Right lobe of liver (tissue), 6 donors: ENCODE measurements at regions of chr22 and their contacts with region 1.

Region 1: GRCh38 chr22:29040385-29041275 is 21.0 kb downstream of the C22orf31 start:
- DNase-seq: peak in 1 of 3 donors; percentile 71
- ATAC-seq: peak; percentile 73 to 83 (median 78)
- H3K4me3 ChIP-seq: no peak overlapping the region
- H3K27ac ChIP-seq: no peak overlapping the region
- H3K4me1 ChIP-seq: peaks cover 0 to 35% (median 0%) of the 10 kb centered on the region in 4 donors
- H3K27me3 ChIP-seq: no peaks in the 10 kb centered on the region
- CTCF ChIP-seq: peak; percentile 94 to 99 (median 96)
- POLR2A ChIP-seq: no peak

Region 2: DNA sequence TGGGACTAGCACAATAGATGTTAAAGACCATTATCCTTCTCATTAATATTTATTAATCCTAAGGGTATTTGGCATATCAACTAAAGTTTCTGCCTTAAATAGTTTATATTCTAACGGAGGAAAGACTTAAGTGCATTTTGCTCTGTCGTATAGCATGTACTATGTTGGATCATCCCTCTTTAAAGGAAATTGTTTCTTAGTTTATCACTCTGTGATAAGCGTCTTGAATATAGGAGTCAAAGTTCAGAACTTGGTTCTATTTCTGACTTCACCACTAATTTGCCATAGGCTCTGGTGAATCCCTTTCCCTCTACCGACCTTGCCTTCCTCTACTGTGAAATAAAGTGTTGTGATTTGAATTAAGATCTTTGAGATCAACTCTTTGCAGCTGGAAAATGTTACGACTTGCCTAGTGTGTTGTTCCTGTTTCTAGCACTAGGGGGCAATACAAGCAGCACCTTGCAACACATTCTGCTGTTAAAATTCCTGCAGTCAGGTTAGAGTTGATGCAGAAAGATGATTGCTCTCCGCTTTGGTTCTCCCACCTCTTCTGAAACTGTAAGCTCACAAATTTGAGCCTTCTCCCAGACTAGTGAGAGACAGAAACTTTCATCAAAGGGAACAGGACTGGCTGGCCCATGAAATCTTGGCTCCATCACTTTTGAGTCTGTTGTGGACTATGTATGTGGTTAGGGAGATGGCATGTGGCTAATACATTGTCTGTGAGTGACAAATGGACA is 185.1 kb before region 1 on chr22:
- intact Hi-C with region 1: loop called (anchors 5 kb)
- DNase-seq: no peak
- ATAC-seq: peak; percentile 83 to 91 (median 90)
- H3K4me3 ChIP-seq: no peak overlapping the region
- H3K27ac ChIP-seq: no peak overlapping the region
- H3K4me1 ChIP-seq: peaks cover 0 to 23% (median 0%) of the 10 kb centered on the region in 4 donors
- H3K27me3 ChIP-seq: no peaks in the 10 kb centered on the region
- CTCF ChIP-seq: peak; percentile 85 to 97 (median 90)
- POLR2A ChIP-seq: no peak

Region 3: DNA sequence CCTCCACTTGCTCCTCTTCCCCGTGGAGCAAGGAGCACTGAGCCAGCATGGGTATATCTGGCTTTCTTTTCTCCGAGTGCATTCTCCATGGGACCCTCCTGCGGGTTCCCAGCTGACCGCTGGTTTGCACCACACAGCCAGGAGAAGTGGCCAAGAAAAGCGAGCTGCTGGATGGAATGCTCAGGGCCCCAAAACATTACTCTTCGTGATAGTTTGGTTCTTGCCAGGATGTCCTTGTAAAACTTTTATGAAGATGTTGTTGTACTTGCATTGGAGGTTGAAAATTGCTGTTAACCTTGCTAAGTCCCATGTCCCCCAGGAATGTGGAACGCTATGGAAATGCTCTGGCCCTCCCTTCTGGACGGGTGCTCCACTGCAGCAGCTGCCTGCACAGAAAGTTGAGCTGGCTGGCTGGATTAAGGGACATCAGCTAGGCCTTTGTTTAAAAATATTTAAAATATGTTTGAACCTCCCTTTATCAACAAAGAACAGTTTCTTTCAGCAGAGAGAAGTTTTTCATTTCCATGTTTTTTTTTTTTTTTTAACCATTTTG is 88.6 kb before region 1 on chr22:
- intact Hi-C with region 1: no loop called
- DNase-seq: no peak
- ATAC-seq: peak in 2 of 4 donors; percentile 10 to 17
- H3K4me3 ChIP-seq: no peak overlapping the region
- H3K27ac ChIP-seq: no peak overlapping the region
- H3K4me1 ChIP-seq: peaks cover 0 to 28% (median 5%) of the 10 kb centered on the region in 4 donors
- H3K27me3 ChIP-seq: no peaks in the 10 kb centered on the region
- CTCF ChIP-seq: peak in 1 of 4 donors; percentile 24
- POLR2A ChIP-seq: no peak

Region 4: GRCh38 chr22:29093501-29094300 is 53.1 kb after region 1 on chr22:
- intact Hi-C with region 1: no loop called
- DNase-seq: peak in 1 of 3 donors; percentile 21
- ATAC-seq: peak; percentile 13 to 47 (median 24)
- H3K4me3 ChIP-seq: no peak overlapping the region
- H3K27ac ChIP-seq: no peak overlapping the region
- H3K4me1 ChIP-seq: peaks cover 0 to 18% (median 0%) of the 10 kb centered on the region in 4 donors
- H3K27me3 ChIP-seq: no peaks in the 10 kb centered on the region
- CTCF ChIP-seq: no peak
- POLR2A ChIP-seq: no peak